GM13976 (cell line): ENCODE measurements at regions of chr10 and their contacts with region 1.

Region 1: GRCh38 chr10:22988581-22989360 is 60.9 kb downstream of the ARMC3 start:
- DNase-seq: peak; percentile 62
- CTCF ChIP-seq: peak; percentile 80

Region 2: DNA sequence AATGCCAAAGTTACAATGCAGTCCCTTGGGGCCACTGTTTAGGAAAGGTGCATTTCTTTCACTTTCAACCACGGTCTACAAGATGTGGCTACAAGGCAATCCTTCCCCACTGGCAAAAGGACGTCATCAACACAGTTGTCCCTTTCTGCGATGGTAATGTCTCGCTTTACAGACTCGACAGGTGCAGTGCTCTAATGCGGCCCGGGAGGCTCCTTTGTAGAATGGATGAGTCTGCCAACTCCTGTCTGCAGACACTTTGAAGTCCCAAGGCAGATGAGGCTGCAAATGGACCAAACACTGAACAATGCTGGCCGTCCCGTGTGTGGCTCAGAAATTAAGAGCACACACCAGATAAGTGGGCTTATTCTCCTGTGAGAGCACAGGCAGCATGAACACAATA is 408.1 kb before region 1 on chr10:
- in situ Hi-C with region 1: loop called (anchors 10 kb)
- DNase-seq: no peak
- CTCF ChIP-seq: no peak